ENCODE measurements at regions of chr17 and their contacts with region 1.

Region 1: GRCh38 chr17:51427856-51428255 is 167.5 kb downstream of the UTP18 start:
- DNase-seq: peak; percentile 45 to 90 (median 72)
- ATAC-seq: peak; percentile 93
- H3K4me3 ChIP-seq: peak overlapping the region; percentile 32
- H3K4me3 Mint-ChIP-seq: peak overlapping the region; percentile 26 to 84 (median 78)
- H3K27ac ChIP-seq: peak overlapping the region; percentile 87
- H3K27ac Mint-ChIP-seq: peak overlapping the region; percentile 91 to 100 (median 97)
- H3K4me1 ChIP-seq: peaks cover 12 to 48% of the 10 kb centered on the region in 2 donors
- H3K4me1 Mint-ChIP-seq: peaks cover 34 to 77% (median 61%) of the 10 kb centered on the region in 7 donors
- H3K27me3 ChIP-seq: no peaks in the 10 kb centered on the region
- H3K27me3 Mint-ChIP-seq: no peaks in the 10 kb centered on the region

Region 2: GRCh38 chr17:50919321-50920085 is 508.4 kb before region 1 on chr17:
- CTCF ChIA-PET with region 1: no interaction called
- POLR2A ChIA-PET with region 1: no interaction called
- intact Hi-C with region 1: loop called in 1 of 2 experiments (anchors 5 kb)
- DNase-seq: peak; percentile 67 to 91 (median 83)
- ATAC-seq: peak; percentile 95
- H3K4me3 ChIP-seq: no peak overlapping the region
- H3K4me3 Mint-ChIP-seq: peak overlapping the region; percentile 36 to 86 (median 75)
- H3K27ac ChIP-seq: peak overlapping the region; percentile 76
- H3K27ac Mint-ChIP-seq: peak overlapping the region; percentile 89 to 98 (median 97)
- H3K4me1 ChIP-seq: peaks cover 22 to 44% of the 10 kb centered on the region in 2 donors
- H3K4me1 Mint-ChIP-seq: peaks cover 19 to 56% (median 43%) of the 10 kb centered on the region in 7 donors
- H3K27me3 ChIP-seq: no peaks in the 10 kb centered on the region
- H3K27me3 Mint-ChIP-seq: peaks cover 0 to 9% (median 0%) of the 10 kb centered on the region in 5 donors

Region 3: GRCh38 chr17:51439395-51440229 is 11.8 kb after region 1 on chr17:
- CTCF ChIA-PET with region 1: interaction called, 4 read pairs
- POLR2A ChIA-PET with region 1: no interaction called
- intact Hi-C with region 1: loop called in 1 of 2 experiments (anchors 1 kb)
- DNase-seq: no peak
- ATAC-seq: peak; percentile 18
- H3K4me3 ChIP-seq: no peak overlapping the region
- H3K4me3 Mint-ChIP-seq: peak overlapping the region; percentile 2 to 72 (median 42)
- H3K27ac ChIP-seq: no peak overlapping the region
- H3K27ac Mint-ChIP-seq: peak overlapping the region; percentile 24 to 85 (median 71)
- H3K4me1 ChIP-seq: peaks cover 0 to 20% of the 10 kb centered on the region in 2 donors
- H3K4me1 Mint-ChIP-seq: peaks cover 17 to 42% (median 31%) of the 10 kb centered on the region in 7 donors
- H3K27me3 ChIP-seq: no peaks in the 10 kb centered on the region
- H3K27me3 Mint-ChIP-seq: no peaks in the 10 kb centered on the region

Region 4: GRCh38 chr17:51461578-51462004 is 33.7 kb after region 1 on chr17:
- CTCF ChIA-PET with region 1: no interaction called
- POLR2A ChIA-PET with region 1: no interaction called
- intact Hi-C with region 1: loop called in 1 of 2 experiments (anchors 5 kb)
- DNase-seq: peak in 8 of 9 donors; percentile 14 to 59 (median 41)
- ATAC-seq: peak; percentile 75
- H3K4me3 ChIP-seq: no peak overlapping the region
- H3K4me3 Mint-ChIP-seq: no peak overlapping the region
- H3K27ac ChIP-seq: no peak overlapping the region
- H3K27ac Mint-ChIP-seq: no peak overlapping the region
- H3K4me1 ChIP-seq: no peaks in the 10 kb centered on the region
- H3K4me1 Mint-ChIP-seq: peaks cover 0 to 6% (median 0%) of the 10 kb centered on the region in 7 donors
- H3K27me3 ChIP-seq: no peaks in the 10 kb centered on the region
- H3K27me3 Mint-ChIP-seq: peaks cover 0 to 6% (median 0%) of the 10 kb centered on the region in 5 donors